Endothelial cell of umbilical vein (primary cell): ENCODE measurements at regions of chr3 and their contacts with region 1.

Region 1: DNA sequence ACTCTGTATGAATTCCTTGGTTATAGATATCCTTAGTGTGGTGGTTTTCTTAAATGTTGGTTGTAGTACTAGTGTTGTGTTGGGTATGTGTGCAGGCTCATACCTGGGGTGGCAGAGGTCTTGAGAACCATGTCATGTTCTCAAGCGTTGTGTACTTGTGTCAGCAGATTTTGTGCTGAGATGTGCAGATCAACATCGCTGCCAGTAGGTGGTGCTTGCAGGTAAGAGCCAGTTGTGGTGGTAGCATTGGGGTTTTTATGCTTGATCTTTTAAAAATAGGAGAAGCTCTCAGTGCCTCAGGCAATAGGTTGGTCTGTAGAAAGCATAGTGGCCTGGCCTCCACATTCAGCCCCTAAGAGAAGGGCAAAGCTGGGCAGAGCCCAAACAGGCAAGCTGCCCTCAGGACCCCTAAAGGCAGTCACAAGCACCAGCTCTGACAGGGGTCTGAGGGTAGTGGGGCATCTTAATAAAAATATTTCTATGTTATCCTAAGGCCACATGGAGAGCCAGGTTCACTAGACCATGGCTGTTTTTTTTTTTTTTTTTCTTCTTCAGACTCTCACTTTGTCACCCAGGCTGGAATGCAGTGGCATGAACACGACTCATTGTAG is 164.0 kb downstream of the IL20RB start:
- DNase-seq: peak; percentile 30
- H3K4me3 ChIP-seq: no peak overlapping the region
- H3K27ac ChIP-seq: no peak overlapping the region
- H3K4me1 ChIP-seq: no peaks in the 10 kb centered on the region
- H3K27me3 ChIP-seq: peaks cover 0 to 2% of the 10 kb centered on the region in 2 experiments
- CTCF ChIP-seq: peak; percentile 38 to 71
- POLR2A ChIP-seq: no peak

Region 2: GRCh38 chr3:136984837-136985236 is 137.0 kb before region 1 on chr3:
- CTCF ChIA-PET with region 1: no interaction called
- POLR2A ChIA-PET with region 1: no interaction called
- dilution Hi-C with region 1: no loop called
- intact Hi-C with region 1: no loop called
- DNase-seq: peak; percentile 66
- H3K4me3 ChIP-seq: no peak overlapping the region
- H3K27ac ChIP-seq: no peak overlapping the region
- H3K4me1 ChIP-seq: no peaks in the 10 kb centered on the region
- H3K27me3 ChIP-seq: no peaks in the 10 kb centered on the region
- CTCF ChIP-seq: no peak
- POLR2A ChIP-seq: no peak

Region 3: DNA sequence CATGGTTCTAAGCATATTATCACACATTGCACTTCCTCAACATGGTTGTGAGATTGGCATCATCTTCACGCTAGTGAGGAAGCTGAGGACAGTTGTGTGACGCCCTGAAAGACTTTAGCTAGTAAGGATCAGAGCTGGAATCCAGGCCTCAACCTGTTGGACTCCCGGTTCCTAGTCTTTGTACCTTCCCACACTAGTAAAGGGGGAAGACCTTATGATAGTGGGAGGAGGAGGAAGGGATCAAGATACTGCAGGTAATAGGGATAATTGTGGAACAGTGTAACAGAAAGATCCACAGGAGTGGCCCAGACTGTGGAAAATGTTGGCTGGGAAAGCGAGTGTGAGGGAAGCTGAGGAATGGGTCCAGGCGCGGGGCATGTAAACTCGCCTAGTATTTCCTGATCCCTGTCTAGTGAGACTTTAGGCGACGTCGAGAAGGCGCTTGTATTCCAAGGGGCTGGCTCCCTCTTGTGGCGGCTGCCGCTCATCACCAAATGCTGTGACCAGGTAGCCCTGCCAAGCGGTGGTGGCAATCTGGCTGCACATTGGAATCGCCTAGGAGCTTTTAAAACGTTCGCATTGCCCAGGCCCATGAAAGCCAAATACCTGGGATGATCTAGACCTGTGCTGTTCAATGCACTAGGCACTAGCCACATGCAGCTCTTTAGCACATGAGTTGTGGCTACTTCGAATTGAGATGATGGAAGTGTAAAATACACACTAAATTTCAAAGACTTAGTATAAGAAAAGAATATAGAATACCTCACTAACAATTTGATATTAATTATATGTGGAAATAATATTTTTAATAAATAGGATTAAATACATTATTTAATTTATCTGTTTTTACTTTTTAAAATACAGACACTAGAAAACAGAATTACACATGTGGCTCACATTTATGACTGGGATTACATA is 849.4 kb after region 1 on chr3:
- CTCF ChIA-PET with region 1: no interaction called
- POLR2A ChIA-PET with region 1: no interaction called
- dilution Hi-C with region 1: no loop called
- intact Hi-C with region 1: loop called (anchors 1 kb)
- DNase-seq: peak; percentile 59
- H3K4me3 ChIP-seq: no peak overlapping the region
- H3K27ac ChIP-seq: no peak overlapping the region
- H3K4me1 ChIP-seq: no peaks in the 10 kb centered on the region
- H3K27me3 ChIP-seq: peaks cover 2 to 5% of the 10 kb centered on the region in 2 experiments
- CTCF ChIP-seq: peak; percentile 82 to 92
- POLR2A ChIP-seq: no peak